Activated T-helper 1 cell treated with anti-CD3 and anti-CD28 coated beads, Interleukin-12 subunit alpha, Interleukin-12 subunit beta, Interleukin-2, Interleukin-4 antibody, amounts not matched to agents 30 ng/mL and 10 ng/mL and 1 ng/mL, durations not matched to agents 14 hours and 24 hours and 36 hours (primary cell): ENCODE measurements at regions of chr1 and their contacts with region 1.

Region 1: DNA sequence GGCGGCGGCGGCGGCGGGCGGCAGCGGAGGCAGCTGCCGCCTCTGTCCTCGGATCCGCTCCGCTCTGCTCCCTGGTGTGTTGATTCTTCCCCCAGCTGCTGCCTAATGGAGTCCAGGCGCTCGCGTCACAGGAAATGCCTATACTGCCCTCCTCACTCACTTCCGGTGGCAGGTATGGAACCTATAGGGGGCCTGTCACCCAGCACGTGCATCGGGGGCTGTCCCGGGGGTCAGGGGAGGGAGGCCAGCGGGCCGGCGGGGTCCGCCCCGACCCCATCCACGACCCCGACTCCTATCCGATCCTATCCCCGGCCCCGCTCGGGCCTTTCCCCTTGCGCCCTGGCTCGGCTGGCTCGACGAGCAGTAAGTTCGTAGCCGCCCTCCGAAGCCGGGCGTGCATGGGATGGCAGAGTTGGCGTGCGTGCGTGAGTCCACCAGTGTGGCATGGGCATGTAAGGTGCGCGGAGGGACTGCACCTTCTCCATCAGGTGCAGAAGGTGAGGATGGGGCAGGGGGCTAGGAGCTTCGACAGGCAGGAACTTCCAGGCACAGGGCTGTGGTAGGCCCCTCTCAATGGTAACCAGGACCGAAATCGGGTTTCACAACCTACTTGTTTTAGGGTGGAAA is at the start of gene WDR26:
- DNase-seq: peak; percentile 83
- H3K4me3 Mint-ChIP-seq: peak within 1 kb of the TSS; percentile 92
- H3K27ac Mint-ChIP-seq: peak within 1 kb of the TSS; percentile 95
- H3K4me1 Mint-ChIP-seq: peaks cover 53% of the 10 kb centered on the region
- H3K27me3 Mint-ChIP-seq: no peaks in the 10 kb centered on the region
- total RNA-seq, gene WDR26: 91.6 and 95.8 TPM in 2 replicates

Region 2: DNA sequence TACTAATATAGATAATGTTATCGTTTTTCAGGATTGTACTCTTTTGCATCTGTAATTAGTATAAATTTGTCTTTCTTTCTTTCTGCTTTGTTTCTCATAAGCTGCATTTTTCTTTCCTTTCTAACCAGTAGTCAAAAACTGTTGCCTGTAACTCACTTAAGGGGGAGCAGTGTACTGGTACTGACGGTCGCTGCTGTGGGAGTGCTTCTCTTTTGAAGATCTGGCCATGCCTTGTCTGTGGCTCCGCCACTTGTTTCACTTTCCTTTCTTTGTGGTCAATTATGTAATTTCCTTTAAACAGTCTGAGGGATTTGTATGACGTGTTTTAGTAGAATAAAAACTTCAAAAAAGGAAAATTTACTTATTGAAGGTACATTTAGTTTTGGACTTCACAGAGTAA is 1780.0 kb before region 1 on chr1:
- intact Hi-C with region 1: loop called (anchors 10 kb)
- DNase-seq: peak; percentile 73
- H3K4me3 Mint-ChIP-seq: peak overlapping the region; percentile 5
- H3K27ac Mint-ChIP-seq: peak overlapping the region; percentile 61
- H3K4me1 Mint-ChIP-seq: peaks cover 59% of the 10 kb centered on the region
- H3K27me3 Mint-ChIP-seq: no peaks in the 10 kb centered on the region

Region 3: DNA sequence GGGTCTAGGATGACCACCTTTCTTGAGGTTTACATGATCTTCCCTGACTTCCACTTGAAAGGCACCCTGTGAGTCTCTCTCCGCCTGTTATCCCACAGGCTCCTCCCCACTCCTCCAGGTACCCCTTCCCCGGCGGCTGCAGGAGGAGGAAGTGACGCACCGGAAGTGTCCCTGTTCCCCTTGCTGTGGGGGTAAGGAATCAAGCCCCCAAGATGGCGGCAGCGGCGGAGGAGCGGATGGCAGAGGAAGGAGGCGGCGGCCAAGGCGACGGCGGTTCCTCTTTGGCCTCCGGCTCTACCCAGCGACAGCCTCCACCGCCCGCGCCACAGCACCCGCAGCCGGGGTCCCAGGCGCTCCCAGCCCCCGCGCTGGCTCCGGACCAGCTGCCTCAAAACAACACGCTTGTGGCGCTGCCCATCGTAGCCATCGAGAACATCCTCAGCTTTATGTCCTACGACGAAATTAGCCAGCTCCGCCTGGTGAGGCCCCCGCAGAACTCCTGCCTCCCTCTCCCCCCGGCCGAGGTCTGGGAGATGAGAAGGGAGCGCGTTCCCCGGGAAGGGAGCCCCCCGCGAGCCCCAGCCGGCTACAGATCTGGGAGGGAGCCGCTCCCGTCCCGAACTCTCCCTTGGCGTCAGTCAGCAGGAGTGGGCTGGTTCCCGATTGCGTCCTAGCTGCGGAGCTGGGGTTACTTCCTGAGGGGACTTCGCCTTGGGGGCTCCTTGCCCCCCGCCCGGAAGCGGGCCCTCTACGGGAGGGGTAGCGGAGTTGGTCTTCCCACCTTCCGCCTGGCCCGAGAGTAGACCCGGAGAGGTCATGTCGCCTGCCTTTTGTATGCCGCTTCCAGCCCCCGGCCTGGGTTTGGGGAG is 320.7 kb before region 1 on chr1 and contains the start of gene FBXO28:
- intact Hi-C with region 1: loop called (anchors 1 kb)
- DNase-seq: peak; percentile 90
- H3K4me3 Mint-ChIP-seq: peak within 1 kb of the TSS; percentile 91
- H3K27ac Mint-ChIP-seq: peak within 1 kb of the TSS; percentile 89
- H3K4me1 Mint-ChIP-seq: peaks cover 27% of the 10 kb centered on the region
- H3K27me3 Mint-ChIP-seq: peaks cover 19% of the 10 kb centered on the region
- total RNA-seq, gene FBXO28: 29.3 and 32.2 TPM in 2 replicates

Region 4: GRCh38 chr1:224329842-224330753 is 104.7 kb before region 1 on chr1 and contains the start of gene NVL:
- intact Hi-C with region 1: loop called (anchors 1 kb)
- DNase-seq: peak; percentile 76
- H3K4me3 Mint-ChIP-seq: peak within 1 kb of the TSS; percentile 98
- H3K27ac Mint-ChIP-seq: peak within 1 kb of the TSS; percentile 100
- H3K4me1 Mint-ChIP-seq: peaks cover 45% of the 10 kb centered on the region
- H3K27me3 Mint-ChIP-seq: no peaks in the 10 kb centered on the region
- total RNA-seq, gene NVL: 47.2 and 47.6 TPM in 2 replicates

Region 5: GRCh38 chr1:224454397-224455066 is 19.7 kb after region 1 on chr1:
- intact Hi-C with region 1: loop called (anchors 1 kb)
- DNase-seq: no peak
- H3K4me3 Mint-ChIP-seq: no peak overlapping the region
- H3K27ac Mint-ChIP-seq: no peak overlapping the region
- H3K4me1 Mint-ChIP-seq: peaks cover 31% of the 10 kb centered on the region
- H3K27me3 Mint-ChIP-seq: no peaks in the 10 kb centered on the region

Region 6: DNA sequence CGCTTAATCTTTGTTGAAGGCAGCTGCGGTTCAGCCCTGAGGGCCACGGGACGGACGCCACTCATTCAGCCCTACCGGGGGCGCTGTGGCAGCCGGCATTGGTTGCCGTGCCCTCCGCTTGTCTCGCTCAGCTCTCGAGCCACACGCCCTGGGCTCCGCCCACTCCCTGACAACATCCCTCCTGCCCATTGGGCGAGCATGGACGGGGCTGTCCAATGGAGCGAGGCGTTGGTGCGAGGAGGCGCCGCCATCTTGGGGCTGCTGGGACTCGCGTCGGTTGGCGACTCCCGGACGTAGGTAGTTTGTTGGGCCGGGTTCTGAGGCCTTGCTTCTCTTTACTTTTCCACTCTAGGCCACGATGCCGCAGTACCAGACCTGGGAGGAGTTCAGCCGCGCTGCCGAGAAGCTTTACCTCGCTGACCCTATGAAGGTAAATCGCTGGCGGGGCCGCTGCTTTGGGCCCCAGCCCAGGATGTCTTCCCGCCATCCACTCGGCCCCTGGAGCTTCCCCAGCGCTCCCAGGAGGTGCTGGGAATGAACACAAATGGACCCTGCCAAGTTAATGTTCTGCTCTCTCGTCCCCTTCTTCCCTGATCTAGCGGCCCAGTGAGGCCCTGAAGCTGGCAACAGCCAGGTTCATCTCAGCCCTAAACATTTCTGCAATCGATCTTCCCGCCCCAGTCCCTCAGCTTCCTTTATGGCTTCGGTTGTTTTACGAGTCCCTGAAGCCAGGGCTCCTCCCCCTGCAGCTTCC is 1343.0 kb after region 1 on chr1 and contains the start of gene SRP9:
- intact Hi-C with region 1: loop called (anchors 10 kb)
- DNase-seq: peak; percentile 99
- H3K4me3 Mint-ChIP-seq: no peak within 1 kb of the TSS
- H3K27ac Mint-ChIP-seq: no peak within 1 kb of the TSS
- H3K4me1 Mint-ChIP-seq: peaks cover 29% of the 10 kb centered on the region
- H3K27me3 Mint-ChIP-seq: no peaks in the 10 kb centered on the region
- total RNA-seq, gene SRP9: 230 and 233 TPM in 2 replicates

Region 7: DNA sequence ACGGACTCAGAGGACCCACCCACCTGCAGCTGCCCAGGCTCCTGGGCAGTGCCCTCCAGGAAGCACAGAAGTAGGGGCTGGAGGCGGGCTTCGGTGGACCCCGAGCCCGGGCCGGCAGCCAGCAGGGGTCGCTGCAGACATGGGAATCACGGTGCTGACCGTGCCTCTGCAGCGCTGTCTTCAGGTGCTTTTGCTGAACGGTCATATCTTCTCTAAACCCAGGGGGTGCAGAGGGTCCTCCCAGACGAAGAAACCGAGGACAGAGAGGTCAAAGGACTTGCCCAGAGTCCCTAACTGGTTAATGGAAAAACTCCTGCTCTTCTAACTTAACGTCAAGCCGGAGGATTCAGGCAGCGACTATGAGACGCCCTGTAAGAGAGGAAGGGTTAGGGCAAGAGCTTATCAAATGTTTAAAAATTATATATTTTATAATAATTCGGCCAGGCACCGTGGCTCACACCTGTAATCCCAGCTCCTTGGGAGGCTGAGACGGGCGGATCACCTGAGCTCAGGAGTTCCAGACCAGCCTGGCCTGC is 1527.7 kb after region 1 on chr1:
- intact Hi-C with region 1: no loop called
- DNase-seq: peak; percentile 22
- H3K4me3 Mint-ChIP-seq: no peak overlapping the region
- H3K27ac Mint-ChIP-seq: no peak overlapping the region
- H3K4me1 Mint-ChIP-seq: no peaks in the 10 kb centered on the region
- H3K27me3 Mint-ChIP-seq: peaks cover 19% of the 10 kb centered on the region